Heart left ventricle (tissue), 16 donors: ENCODE measurements at regions of chr14 and their contacts with region 1.

Region 1: DNA sequence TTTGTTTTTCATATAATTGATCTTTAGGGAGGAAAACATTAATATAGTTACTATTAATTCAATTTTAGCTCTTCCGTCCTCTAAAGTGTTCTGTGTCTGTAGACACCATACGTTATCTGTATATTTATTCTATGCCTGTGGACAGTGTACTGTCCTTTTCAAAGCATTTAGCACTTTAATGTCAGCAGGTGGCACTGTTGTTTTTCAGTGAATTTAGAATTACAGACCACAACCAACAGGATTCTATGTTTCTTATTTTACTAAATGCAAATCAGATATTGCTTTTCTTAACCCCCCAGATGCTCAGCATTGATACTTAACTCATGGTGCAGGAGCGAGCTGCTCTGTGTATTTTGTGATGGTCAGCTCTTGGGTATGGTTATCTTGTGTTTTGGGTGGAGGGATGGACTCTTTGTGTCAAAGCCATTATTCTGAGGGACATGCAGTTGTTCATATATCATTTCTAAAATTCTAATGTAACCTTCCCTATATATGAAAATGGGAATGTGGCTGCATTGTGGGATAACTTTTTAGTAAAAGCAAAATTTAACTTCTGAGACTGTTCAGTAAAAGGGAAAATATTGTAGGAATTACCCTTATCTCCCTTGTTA is 65.2 kb downstream of the PAPOLA start:
- DNase-seq: no peak
- ATAC-seq: peak in 2 of 4 donors; percentile 36 to 39
- H3K4me3 ChIP-seq: no peak overlapping the region
- H3K27ac ChIP-seq: no peak overlapping the region
- H3K4me1 ChIP-seq: peaks cover 0 to 4% (median 0%) of the 10 kb centered on the region in 12 donors
- H3K27me3 ChIP-seq: no peaks in the 10 kb centered on the region
- CTCF ChIP-seq: peak; percentile 15 to 61 (median 44)
- POLR2A ChIP-seq: no peak

Region 2: GRCh38 chr14:96304956-96305355 is 262.4 kb before region 1 on chr14:
- intact Hi-C with region 1: loop called in 1 of 10 experiments (anchors 10 kb)
- DNase-seq: no peak
- ATAC-seq: no peak
- H3K4me3 ChIP-seq: no peak overlapping the region
- H3K27ac ChIP-seq: no peak overlapping the region
- H3K4me1 ChIP-seq: no peaks in the 10 kb centered on the region
- H3K27me3 ChIP-seq: no peaks in the 10 kb centered on the region
- CTCF ChIP-seq: peak in 2 of 12 donors; percentile 6 to 15
- POLR2A ChIP-seq: no peak

Region 3: DNA sequence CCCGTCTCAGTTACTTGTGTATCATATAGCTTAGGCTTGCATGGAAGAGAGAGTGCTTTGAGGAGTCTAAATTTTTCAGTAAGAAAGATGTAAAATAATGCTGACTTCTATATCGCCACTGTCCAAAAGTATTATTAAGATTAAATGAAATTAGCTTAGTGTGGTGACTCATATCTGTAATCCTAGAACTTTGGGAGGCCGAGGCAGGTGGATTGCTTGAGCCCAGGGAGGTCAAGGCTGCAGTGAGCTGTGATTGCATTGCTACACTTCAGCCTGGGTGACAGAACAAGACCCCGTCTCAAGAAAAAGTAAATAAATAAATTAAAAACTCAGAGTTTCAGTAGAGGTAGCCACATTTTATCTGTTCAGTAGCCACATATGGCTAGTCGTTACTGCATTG is 41.9 kb before region 1 on chr14:
- intact Hi-C with region 1: loop called in 1 of 10 experiments (anchors 5 kb)
- DNase-seq: no peak
- ATAC-seq: no peak
- H3K4me3 ChIP-seq: no peak overlapping the region
- H3K27ac ChIP-seq: no peak overlapping the region
- H3K4me1 ChIP-seq: no peaks in the 10 kb centered on the region
- H3K27me3 ChIP-seq: no peaks in the 10 kb centered on the region
- CTCF ChIP-seq: no peak
- POLR2A ChIP-seq: no peak

Region 4: DNA sequence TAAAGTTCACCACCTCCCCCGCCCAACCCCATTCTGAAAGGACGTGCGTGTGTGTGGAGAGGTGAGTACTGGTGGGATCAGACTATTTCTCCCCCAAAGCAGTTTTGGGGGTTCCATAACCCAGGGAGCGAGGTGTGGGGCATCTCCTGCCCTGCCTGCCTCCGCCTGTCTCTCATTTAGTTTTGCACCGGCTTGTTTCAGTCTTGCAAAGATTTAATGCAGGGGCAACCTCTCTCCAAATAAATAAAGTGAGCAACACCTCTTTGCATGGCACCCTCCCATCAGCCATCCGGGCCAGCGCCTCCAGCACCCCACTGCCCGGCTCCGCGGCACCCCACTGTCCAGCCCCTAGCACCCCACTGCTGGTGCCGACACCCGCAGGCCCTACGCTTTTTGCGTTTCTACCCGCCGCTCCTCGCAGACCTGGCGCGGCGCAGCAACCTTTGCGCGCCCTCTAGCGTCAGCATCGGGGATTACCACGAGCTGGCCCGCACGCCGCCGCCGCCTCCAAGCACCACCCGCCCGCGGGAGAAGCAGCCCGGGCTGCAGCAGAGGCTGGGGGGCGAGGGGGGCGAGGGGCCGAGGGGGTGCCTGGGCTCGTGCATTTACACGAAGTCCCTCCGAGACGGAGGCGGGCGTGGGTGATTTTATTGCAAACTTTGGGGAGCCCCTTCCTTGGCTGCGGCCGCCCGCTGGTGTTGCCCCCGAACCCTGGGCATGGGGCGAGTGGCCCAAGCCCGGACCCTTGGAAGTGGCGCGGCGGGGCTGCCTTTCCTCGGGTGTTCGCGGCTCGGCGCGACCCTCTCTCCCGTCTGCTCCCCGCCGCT is 174.0 kb after region 1 on chr14:
- intact Hi-C with region 1: loop called in 8 of 10 experiments (anchors 2 to 5 kb)
- DNase-seq: peak; percentile 37 to 84 (median 54)
- ATAC-seq: peak in 3 of 4 donors; percentile 62 to 85 (median 77)
- H3K4me3 ChIP-seq: peak overlapping the region in 10 of 12 donors; percentile 19 to 53 (median 42)
- H3K27ac ChIP-seq: no peak overlapping the region
- H3K4me1 ChIP-seq: peaks cover 0 to 10% (median 6%) of the 10 kb centered on the region in 12 donors
- H3K27me3 ChIP-seq: peaks cover 0 to 90% (median 30%) of the 10 kb centered on the region in 9 donors
- CTCF ChIP-seq: peak; percentile 72 to 95 (median 88)
- POLR2A ChIP-seq: no peak